ENCODE measurements at regions of chr12 and their contacts with region 1.

Region 1: DNA sequence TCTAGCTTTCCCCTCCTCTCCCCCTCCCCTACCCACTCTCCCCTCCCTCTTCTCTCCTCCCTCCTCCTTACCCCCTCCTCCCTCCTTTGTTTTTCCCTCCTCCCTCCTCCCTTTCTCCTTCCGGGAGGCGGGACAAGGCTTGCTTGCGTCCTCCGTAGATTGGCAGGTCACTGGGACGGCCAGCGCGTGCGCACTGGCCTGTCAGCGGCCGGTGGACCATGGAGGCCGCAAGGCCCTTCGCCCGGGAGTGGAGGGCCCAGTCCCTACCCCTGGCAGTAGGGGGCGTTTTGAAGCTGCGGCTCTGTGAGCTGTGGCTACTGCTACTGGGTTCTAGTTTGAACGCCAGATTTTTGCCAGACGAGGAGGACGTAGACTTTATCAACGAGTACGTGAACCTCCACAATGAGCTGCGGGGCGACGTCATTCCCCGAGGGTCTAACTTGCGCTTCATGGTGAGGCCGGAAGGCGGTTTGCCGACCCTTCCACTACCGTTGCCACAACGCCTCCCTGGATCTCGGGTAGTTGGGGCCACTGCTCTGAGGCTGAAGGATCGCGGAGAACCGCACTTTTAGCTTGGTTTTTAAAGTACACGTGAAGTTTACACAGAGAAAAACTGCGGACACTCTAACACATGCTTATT is at the start of gene GLIPR1L2:
- DNase-seq: peak; percentile 98
- H3K4me3 ChIP-seq: peak within 1 kb of the TSS; percentile 38 to 63 (median 58)
- H3K27ac ChIP-seq: peak within 1 kb of the TSS; percentile 86 to 92 (median 88)
- H3K4me1 ChIP-seq: peaks cover 0 to 29% (median 19%) of the 10 kb centered on the region in 4 donors
- H3K27me3 ChIP-seq: no peaks in the 10 kb centered on the region
- CTCF ChIP-seq: peak; percentile 63 to 79 (median 72)
- EP300 ChIP-seq: no peak
- POLR2A ChIP-seq: peak; percentile 39 to 63
- total RNA-seq, gene GLIPR1L2: 1.1 to 3.0 (median 1.1) TPM in 3 of 4 donors, not detected in the other

Region 2: GRCh38 chr12:75480469-75480949 is 89.5 kb after region 1 on chr12 and contains the start of gene GLIPR1:
- intact Hi-C with region 1: loop called (anchors 1 kb)
- DNase-seq: peak; percentile 92
- H3K4me3 ChIP-seq: peak within 1 kb of the TSS; percentile 25 to 56 (median 44)
- H3K27ac ChIP-seq: peak within 1 kb of the TSS; percentile 74 to 87 (median 76)
- H3K4me1 ChIP-seq: peaks cover 0 to 46% (median 39%) of the 10 kb centered on the region in 4 donors
- H3K27me3 ChIP-seq: no peaks in the 10 kb centered on the region
- CTCF ChIP-seq: no peak
- EP300 ChIP-seq: peak in 1 of 4 donors; percentile 25
- POLR2A ChIP-seq: peak; percentile 25 to 47
- total RNA-seq, gene GLIPR1: 14.6 to 20.9 (median 17.4) TPM

Region 3: DNA sequence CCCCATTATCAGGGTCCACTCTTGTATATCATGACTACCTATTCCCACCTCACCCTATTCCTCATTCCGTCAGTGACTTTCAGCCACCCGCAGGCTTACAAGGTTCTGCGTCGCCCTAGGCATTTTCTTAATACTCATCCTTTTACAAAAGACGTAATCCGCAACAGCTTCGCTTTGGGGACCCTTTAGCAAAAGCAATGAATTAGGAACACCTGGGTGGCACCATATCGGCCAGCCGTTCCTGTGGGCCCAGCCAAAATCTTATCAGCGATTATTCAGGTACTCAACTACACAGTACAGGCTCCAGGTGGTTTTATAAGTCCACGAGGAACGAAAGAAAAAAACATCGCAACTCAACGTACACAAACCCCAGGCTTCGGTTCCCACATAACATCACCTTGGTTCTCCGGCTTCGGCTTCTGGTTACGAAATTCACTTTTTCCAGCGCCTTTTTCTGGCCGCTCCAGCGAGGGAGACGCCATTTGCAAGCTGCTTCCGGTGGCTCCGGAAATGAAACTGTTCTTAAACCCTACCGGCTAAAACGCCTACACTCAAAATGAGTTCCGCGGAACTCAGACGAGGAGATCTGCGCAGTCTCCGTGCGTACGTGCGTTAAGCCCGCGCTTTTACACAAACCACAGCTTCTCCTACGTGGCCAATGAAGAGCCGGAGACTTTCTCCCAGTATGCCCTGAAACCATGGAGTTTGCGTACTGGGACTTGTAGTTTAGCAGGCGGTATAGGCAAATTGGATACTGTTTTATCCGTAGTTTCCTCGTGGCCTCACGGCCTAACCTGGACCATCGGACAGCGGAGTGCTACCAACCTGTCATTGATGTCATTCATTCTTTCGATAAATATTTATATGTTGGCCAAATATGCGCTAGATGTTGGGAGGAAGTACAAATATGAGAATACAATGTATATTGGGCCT is 120.4 kb after region 1 on chr12 and contains the start of gene KRR1:
- intact Hi-C with region 1: loop called (anchors 2 kb)
- DNase-seq: peak; percentile 97
- H3K4me3 ChIP-seq: peak within 1 kb of the TSS; percentile 75 to 90 (median 84)
- H3K27ac ChIP-seq: peak within 1 kb of the TSS; percentile 77 to 81 (median 77)
- H3K4me1 ChIP-seq: peaks cover 0 to 21% (median 17%) of the 10 kb centered on the region in 4 donors
- H3K27me3 ChIP-seq: no peaks in the 10 kb centered on the region
- CTCF ChIP-seq: no peak
- EP300 ChIP-seq: no peak
- POLR2A ChIP-seq: peak in 1 of 2 donors; percentile 32
- total RNA-seq, gene KRR1: 12.7 to 40.0 (median 29.5) TPM